ENCODE measurements at regions of chr19 and their contacts with region 1.

Region 1: GRCh38 chr19:55385740-55386529 is at the start of gene RPL28:
- DNase-seq: peak; percentile 99
- H3K4me3 Mint-ChIP-seq: peak within 1 kb of the TSS; percentile 99
- H3K27ac Mint-ChIP-seq: peak within 1 kb of the TSS; percentile 96
- H3K4me1 Mint-ChIP-seq: peaks cover 67% of the 10 kb centered on the region
- H3K27me3 Mint-ChIP-seq: no peaks in the 10 kb centered on the region
- total RNA-seq, gene RPL28: 3,109 to 3,457 TPM

Region 2: DNA sequence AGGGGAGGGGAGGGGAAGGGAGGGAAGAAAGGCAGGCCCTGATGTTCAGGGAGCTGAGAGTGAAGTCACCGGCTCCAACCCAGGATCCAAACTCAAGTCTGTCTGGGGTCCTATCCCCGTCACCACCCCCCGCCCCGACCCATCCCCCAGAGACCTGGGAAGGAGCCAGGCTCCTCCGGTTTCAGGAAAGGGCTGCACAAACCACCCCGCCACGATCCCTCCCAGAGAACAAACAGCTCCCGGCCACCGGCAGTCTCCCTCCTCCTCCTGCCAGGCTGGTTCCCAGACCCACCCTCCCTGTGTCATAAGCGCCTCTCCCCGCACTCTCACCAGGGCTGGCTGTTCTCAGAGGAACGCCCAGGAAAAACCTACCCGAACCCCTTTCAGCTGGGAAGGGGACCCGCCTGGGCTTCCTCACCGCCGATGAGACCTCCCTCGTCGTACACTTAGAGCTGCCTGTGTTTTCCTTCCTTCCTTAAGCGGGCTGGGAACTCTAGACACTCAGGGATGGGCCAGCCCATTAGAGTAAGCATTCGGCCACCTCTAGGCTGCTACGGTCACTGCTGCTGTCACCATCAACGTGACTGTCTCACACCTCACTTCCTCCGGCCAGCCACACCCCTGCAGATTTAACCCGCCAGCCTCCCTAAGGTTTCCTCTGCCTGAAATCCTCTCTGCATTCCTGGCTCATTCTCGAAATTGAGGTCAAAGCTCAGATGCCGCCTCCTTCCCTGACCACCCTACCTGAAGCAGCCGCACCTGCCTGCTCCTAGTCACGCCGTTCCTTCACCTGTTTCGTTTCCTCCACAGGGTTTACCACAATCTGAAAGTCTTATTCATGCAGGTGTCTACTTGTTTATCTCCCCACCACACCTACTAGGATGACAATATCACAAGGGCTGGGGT is 316.7 kb before region 1 on chr19:
- CTCF ChIA-PET with region 1: no interaction called
- POLR2A ChIA-PET with region 1: no interaction called
- DNase-seq: no peak
- H3K4me3 Mint-ChIP-seq: peak overlapping the region; percentile 11
- H3K27ac Mint-ChIP-seq: peak overlapping the region; percentile 70
- H3K4me1 Mint-ChIP-seq: peaks cover 36% of the 10 kb centered on the region
- H3K27me3 Mint-ChIP-seq: peaks cover 56% of the 10 kb centered on the region

Region 3: GRCh38 chr19:55407800-55408532 is 22.0 kb after region 1 on chr19:
- CTCF ChIA-PET with region 1: interaction called, 8 read pairs
- POLR2A ChIA-PET with region 1: interaction called, 12 read pairs
- DNase-seq: peak; percentile 98
- H3K4me3 Mint-ChIP-seq: peak overlapping the region; percentile 87
- H3K27ac Mint-ChIP-seq: peak overlapping the region; percentile 99
- H3K4me1 Mint-ChIP-seq: peaks cover 42% of the 10 kb centered on the region
- H3K27me3 Mint-ChIP-seq: peaks cover 6% of the 10 kb centered on the region